ENCODE measurements at regions of chr11 and their contacts with region 1.

Region 1: GRCh38 chr11:8006349-8006977 is 19.3 kb downstream of the EIF3F start:
- DNase-seq: peak; percentile 58
- ATAC-seq: peak; percentile 84
- H3K4me3 Mint-ChIP-seq: no peak overlapping the region
- H3K27ac Mint-ChIP-seq: no peak overlapping the region
- H3K4me1 Mint-ChIP-seq: peaks cover 2% of the 10 kb centered on the region
- H3K27me3 Mint-ChIP-seq: peaks cover 6% of the 10 kb centered on the region
- CTCF ChIP-seq: peak; percentile 83

Region 2: DNA sequence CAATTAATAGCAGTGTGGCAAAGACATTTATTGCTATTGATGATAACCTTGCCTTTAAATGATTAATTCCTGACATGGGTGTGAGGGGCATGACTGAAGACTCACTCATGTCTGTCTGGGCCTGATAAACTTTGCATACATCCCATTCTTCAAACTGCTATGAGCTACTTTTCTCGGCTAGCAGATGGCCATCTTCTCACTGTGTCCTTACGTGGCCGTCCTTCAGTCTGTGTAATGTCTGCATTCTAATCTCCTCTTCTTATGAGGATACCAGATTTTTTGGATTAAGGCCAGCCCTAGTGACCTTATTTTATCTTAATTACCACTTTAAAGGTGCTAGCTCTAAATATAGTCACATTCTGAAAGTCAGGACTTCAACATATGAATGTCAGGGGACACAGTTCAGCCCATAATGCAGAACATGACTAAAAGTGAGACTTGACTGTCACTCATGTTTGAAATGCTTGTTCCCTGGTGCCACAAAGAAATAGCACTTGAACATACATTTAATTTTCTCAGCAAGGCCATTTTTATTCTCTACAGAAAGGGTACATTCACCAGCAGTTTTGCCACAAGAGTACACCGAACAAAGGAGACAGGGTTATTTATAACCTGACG is 107.7 kb before region 1 on chr11:
- CTCF ChIA-PET with region 1: no interaction called
- POLR2A ChIA-PET with region 1: no interaction called
- intact Hi-C with region 1: no loop called
- DNase-seq: no peak
- ATAC-seq: no peak
- H3K4me3 Mint-ChIP-seq: no peak overlapping the region
- H3K27ac Mint-ChIP-seq: no peak overlapping the region
- H3K4me1 Mint-ChIP-seq: no peaks in the 10 kb centered on the region
- H3K27me3 Mint-ChIP-seq: peaks cover 5% of the 10 kb centered on the region
- CTCF ChIP-seq: no peak

Region 3: GRCh38 chr11:8018484-8019313 is 12.2 kb after region 1 on chr11:
- CTCF ChIA-PET with region 1: interaction called, 15 read pairs
- POLR2A ChIA-PET with region 1: interaction called, 3 read pairs
- intact Hi-C with region 1: no loop called
- DNase-seq: peak; percentile 76
- ATAC-seq: peak; percentile 78
- H3K4me3 Mint-ChIP-seq: peak overlapping the region; percentile 61
- H3K27ac Mint-ChIP-seq: peak overlapping the region; percentile 20
- H3K4me1 Mint-ChIP-seq: peaks cover 11% of the 10 kb centered on the region
- H3K27me3 Mint-ChIP-seq: peaks cover 32% of the 10 kb centered on the region
- CTCF ChIP-seq: no peak

Region 4: DNA sequence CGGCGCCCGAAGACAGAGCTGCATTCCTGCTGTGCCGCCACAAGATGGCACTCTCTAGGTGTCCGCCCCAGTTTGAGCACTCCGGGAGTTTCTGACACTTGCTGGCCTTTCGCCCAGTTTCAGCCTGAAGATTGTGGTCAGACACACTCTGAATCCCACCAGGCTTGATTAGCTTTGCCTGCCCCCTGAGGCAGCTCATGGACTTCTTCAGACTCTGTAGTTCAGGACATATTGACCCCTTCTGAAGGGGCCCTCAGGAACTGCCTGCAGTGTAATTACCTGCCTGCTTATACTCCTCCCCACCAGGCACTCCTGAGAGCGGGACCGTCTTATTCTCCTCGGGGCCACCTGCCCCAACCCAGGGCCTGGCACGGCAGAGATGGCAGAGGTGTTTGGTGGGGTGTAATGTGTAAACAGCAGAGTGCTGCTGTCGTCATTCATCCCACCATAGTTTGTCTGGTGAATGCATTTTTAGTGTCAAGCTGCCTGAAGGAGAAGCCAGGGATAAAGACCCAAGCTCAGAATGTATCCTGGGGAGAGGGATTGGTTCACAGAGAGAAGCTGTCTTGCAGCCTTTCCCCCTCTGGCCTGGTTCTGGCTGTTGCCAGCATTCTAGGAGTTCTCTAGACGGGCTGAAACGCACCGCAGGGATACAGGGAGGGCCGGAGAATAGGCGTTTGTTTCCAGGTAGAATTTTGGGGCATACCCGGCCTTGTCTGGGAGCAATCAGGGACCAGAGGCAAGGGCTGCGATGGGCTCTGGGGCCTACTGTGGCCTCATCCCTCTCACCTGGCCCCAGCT is 27.0 kb after region 1 on chr11:
- CTCF ChIA-PET with region 1: interaction called, 22 read pairs
- POLR2A ChIA-PET with region 1: no interaction called
- intact Hi-C with region 1: no loop called
- DNase-seq: peak; percentile 61
- ATAC-seq: peak; percentile 93
- H3K4me3 Mint-ChIP-seq: no peak overlapping the region
- H3K27ac Mint-ChIP-seq: no peak overlapping the region
- H3K4me1 Mint-ChIP-seq: peaks cover 2% of the 10 kb centered on the region
- H3K27me3 Mint-ChIP-seq: peaks cover 15% of the 10 kb centered on the region
- CTCF ChIP-seq: peak; percentile 80

Region 5: DNA sequence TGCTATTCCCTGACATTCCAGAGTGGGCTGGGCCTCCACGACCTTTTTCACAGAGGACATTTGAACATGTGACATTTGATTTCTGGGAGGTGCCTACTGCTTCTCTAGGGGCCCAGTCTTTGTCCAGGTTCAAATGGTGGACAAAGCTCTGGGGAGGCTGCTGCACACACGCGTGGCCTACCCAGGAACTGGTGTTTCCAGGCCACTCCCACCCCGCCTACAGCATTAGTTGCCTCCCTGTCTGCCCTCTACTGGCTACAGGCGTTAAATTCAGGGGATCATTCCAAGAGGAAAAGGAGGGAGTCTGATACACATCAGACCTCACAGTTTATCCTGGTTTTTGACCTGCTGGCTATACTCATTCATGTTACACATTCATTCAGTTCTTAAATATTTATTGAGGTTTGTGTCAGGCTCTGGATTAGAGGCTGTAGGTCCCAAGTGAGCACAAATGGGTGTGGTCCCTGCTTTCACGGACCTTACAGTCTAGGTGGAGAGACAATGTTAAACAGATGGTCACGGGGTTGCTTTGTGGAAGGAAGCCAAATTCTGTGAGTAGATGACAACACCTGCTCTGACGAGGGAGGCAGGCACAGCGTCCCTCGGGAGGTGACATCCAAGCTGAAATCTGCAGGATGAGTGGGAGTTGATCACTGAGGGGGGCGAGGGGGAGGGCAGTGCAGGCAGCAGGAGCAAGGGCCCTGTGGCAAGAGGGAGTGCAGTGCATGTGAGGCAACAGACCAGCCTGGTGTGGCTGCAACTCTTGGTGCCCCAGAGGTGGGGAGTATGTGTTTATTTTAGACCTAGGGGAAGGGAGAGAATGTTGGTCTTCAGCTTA is 86.3 kb after region 1 on chr11:
- CTCF ChIA-PET with region 1: interaction called, 161 read pairs
- POLR2A ChIA-PET with region 1: no interaction called
- intact Hi-C with region 1: loop called (anchors 2 kb)
- DNase-seq: peak; percentile 68
- ATAC-seq: peak; percentile 88
- H3K4me3 Mint-ChIP-seq: no peak overlapping the region
- H3K27ac Mint-ChIP-seq: no peak overlapping the region
- H3K4me1 Mint-ChIP-seq: no peaks in the 10 kb centered on the region
- H3K27me3 Mint-ChIP-seq: no peaks in the 10 kb centered on the region
- CTCF ChIP-seq: peak; percentile 52

Measured in activated CD8-positive, alpha-beta T cell treated with anti-CD3 and anti-CD28 coated beads for 36 hours (primary cell).